ENCODE measurements at regions of chrX and their contacts with region 1.

Region 1: DNA sequence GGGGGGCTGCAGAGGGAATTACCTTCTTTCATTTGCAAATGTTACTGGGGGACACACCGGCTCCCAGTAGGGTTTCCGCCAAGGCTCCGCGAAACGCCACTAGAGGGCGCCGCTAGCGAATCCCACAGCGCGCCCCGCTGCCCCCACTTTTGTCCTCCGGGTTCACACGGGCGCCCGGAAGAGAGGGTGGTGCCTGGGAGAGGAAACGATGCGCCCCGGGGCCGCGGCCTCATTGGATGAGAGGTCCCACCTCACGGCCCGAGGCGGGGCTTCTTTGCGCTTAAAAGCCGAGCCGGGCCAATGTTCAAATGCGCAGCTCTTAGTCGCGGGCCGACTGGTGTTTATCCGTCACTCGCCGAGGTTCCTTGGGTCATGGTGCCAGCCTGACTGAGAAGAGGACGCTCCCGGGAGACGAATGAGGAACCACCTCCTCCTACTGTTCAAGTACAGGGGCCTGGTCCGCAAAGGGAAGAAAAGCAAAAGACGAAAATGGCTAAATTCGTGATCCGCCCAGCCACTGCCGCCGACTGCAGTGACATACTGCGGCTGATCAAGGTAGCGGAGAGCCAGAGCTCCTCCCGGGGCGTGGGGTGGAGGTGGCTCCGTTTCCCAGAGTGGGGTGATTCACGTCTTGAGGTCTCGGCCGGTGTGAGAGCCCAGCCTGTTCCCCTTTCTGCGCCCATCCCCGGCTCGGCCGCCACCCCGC is at the start of gene SAT1:
- DNase-seq: peak; percentile 90
- H3K4me3 Mint-ChIP-seq: peak within 1 kb of the TSS; percentile 97
- H3K27ac Mint-ChIP-seq: peak within 1 kb of the TSS; percentile 95
- H3K4me1 Mint-ChIP-seq: peaks cover 38% of the 10 kb centered on the region
- H3K27me3 Mint-ChIP-seq: no peaks in the 10 kb centered on the region
- total RNA-seq, gene SAT1: 71.8 and 74.8 TPM in 2 replicates

Region 2: DNA sequence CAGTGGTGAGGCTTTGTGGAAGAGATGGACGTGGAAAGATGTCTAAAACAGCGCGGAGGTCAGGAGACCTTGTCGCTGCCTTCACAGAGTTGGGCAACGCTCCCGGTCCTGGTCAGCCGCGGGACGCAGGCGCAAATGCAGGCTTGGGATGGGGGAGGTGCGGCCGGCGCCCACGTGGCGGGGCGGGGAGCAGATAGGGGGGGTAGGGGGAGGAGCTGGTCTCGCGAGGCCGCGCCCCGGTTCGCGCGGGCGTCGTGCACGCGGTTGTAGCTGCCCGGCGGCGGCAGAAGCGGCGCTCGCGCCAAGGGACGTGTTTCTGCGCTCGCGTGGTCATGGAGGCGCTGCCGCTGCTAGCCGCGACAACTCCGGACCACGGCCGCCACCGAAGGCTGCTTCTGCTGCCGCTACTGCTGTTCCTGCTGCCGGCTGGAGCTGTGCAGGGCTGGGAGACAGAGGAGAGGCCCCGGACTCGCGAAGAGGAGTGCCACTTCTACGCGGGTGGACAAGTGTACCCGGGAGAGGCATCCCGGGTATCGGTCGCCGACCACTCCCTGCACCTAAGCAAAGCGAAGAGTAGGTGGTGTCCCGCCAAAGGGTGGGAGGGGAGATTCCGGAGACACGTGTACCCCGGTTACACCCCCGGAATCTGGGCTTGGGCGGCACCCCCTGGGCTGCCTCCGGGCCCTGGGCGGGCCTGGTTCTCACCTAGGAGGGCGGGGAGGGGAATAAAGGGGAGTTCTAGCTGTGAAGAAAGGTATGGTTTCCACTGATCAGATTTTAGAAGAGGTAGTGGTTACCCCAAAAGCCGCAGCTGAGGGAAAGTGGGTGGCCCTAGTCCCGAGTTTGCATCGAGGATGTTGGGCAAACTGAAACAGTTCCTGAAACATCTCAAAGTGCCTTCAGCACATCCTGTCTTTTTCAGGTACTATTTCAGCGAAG is 115.5 kb before region 1 on chrX and contains the start of gene PRDX4:
- intact Hi-C with region 1: loop called (anchors 2 kb)
- DNase-seq: peak; percentile 66
- H3K4me3 Mint-ChIP-seq: peak within 1 kb of the TSS; percentile 88
- H3K27ac Mint-ChIP-seq: peak within 1 kb of the TSS; percentile 94
- H3K4me1 Mint-ChIP-seq: peaks cover 37% of the 10 kb centered on the region
- H3K27me3 Mint-ChIP-seq: no peaks in the 10 kb centered on the region
- total RNA-seq, gene PRDX4: 75.5 and 83.2 TPM in 2 replicates

Region 3: DNA sequence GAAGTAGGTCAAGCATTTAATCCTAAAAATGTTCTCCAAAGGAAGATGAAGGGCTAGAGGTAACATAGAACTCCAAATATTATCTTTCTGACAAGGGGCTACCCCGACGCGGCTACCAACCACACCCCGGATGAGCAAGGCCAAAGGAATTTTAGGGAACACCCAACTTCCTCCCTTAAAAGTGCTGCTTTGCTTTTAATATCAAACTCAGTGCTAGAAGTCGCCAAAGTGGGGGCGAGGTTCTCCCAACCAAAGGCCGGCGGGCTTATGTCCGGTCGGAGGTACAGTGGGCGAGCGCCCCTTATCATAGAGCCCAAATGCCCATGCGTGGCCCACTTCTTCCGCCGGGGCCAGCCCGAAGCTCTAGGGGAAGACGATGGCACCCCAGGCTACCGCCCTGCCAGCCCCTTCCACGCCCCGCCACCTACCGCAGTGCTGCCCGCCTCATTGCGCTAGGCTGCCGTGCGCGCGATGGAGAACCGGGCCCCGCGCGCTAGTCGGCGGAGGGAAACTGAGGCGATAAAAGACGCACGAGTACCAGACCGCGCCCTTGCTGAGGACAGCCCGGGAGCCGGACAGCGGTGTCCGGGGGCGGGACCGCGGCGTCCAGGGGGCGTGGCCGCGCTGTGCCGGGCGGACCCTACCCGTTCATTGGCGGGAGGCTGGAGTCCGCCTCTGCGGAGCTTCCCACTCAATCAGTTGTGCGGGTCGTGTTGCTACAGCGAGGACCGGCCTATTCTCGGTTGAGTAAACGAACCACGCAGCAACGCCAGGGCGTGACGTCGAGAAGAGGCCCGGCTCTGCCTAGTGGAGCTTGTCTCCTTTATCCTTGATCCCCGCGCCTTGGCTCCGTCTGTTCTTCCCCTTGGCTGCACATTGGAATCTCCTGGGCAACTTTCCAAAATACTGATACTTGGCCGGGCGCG is 40.1 kb before region 1 on chrX and contains the start of gene ACOT9:
- intact Hi-C with region 1: loop called (anchors 1 kb)
- DNase-seq: peak; percentile 77
- H3K4me3 Mint-ChIP-seq: peak within 1 kb of the TSS; percentile 93
- H3K27ac Mint-ChIP-seq: peak within 1 kb of the TSS; percentile 92
- H3K4me1 Mint-ChIP-seq: peaks cover 29% of the 10 kb centered on the region
- H3K27me3 Mint-ChIP-seq: no peaks in the 10 kb centered on the region
- total RNA-seq, gene ACOT9: 58.3 and 60.3 TPM in 2 replicates

Region 4: DNA sequence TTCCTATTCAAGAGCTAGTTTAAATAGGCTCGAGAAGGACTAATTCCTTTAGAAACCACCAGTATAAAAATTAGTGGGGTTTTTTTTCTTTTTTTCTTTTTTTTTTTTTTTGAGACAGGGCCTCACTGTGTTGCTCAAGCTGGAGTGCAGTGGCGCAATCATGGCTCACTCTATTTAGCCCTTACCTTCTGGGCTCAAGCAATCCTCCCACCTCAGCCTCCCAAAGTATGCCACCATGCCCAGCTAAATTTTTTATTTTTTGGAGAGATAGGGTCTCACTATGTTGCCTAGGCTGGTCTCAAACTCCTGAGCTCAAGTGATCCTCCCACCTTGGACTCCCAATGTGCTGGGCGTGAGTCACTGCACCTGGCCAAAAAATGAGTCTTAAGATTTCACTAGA is 71.9 kb after region 1 on chrX:
- intact Hi-C with region 1: no loop called
- DNase-seq: no peak
- H3K4me3 Mint-ChIP-seq: no peak overlapping the region
- H3K27ac Mint-ChIP-seq: no peak overlapping the region
- H3K4me1 Mint-ChIP-seq: no peaks in the 10 kb centered on the region
- H3K27me3 Mint-ChIP-seq: no peaks in the 10 kb centered on the region

Region 5: DNA sequence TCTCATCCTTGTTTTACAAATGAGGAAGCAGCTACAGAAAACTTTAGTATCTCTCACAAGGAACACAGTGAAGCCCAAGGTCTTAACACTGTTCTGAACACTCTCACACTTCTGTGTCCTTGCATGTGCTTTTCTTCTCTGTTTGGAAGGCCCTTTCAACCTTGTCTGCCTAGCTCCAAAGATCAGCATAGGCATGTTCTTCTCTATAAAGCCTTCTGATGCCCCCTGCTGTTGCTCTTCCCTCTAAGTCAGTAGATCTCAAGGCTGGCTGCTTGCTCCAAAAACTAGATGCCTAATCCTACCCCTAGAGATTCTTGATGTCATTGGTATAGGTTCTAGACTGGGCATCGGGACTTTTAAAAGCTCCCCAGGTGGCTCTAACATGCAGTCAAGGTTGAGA is 118.8 kb after region 1 on chrX:
- intact Hi-C with region 1: loop called (anchors 1 kb)
- DNase-seq: peak; percentile 9
- H3K4me3 Mint-ChIP-seq: no peak overlapping the region
- H3K27ac Mint-ChIP-seq: no peak overlapping the region
- H3K4me1 Mint-ChIP-seq: peaks cover 5% of the 10 kb centered on the region
- H3K27me3 Mint-ChIP-seq: no peaks in the 10 kb centered on the region

Region 6: GRCh38 chrX:23952984-23953907 is 170.2 kb after region 1 on chrX:
- intact Hi-C with region 1: loop called (anchors 2 kb)
- DNase-seq: peak; percentile 45
- H3K4me3 Mint-ChIP-seq: peak overlapping the region; percentile 82
- H3K27ac Mint-ChIP-seq: peak overlapping the region; percentile 95
- H3K4me1 Mint-ChIP-seq: peaks cover 28% of the 10 kb centered on the region
- H3K27me3 Mint-ChIP-seq: no peaks in the 10 kb centered on the region

Region 7: DNA sequence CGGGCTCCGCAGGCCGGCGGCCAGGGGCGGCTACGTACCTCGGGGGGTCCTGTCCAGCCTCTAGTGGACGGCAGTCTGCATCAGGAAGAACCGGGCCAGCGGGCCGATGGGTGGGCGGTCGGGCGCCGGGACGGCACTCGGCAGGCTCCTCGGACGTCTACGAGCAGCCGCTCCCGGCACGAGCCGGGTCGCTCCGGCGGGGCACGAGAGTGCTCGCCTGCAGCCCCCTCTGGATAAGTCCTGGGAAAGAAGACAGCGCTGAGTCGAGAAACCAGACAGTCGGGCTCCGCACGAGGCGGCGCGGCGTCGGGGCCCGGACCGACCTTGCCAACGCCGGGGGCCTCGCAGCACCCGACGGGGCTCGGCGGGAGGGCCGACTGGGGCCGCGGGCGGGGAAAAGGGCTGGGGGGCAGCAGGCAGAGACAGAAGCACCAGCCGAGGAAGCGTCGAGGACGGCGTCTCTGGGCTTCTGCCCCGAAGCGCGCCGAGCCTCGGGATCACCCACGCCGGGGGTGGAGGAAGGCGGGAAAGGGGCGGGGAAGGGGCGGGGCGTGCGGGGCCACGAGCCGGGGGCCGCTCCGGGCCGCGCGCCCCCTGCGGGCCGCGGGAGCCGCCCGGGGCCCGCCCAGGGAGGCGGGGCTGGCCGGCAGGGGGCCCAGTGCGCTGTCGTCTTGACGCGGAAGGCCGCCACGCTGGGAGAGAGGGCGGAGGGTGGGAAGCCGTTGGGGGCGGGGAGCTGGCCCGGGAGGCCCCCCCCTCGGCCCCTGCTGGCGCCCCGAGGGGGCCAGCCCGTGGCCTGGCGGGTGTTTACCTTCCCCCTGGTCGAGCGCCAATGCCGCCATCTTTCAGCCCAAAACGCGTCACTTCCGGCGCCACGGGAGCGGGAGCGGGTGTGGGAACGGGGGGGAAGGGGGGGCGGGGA is 242.1 kb after region 1 on chrX:
- intact Hi-C with region 1: loop called (anchors 2 kb)
- DNase-seq: peak; percentile 72
- H3K4me3 Mint-ChIP-seq: peak overlapping the region; percentile 92
- H3K27ac Mint-ChIP-seq: peak overlapping the region; percentile 88
- H3K4me1 Mint-ChIP-seq: peaks cover 25% of the 10 kb centered on the region
- H3K27me3 Mint-ChIP-seq: no peaks in the 10 kb centered on the region

Region 8: DNA sequence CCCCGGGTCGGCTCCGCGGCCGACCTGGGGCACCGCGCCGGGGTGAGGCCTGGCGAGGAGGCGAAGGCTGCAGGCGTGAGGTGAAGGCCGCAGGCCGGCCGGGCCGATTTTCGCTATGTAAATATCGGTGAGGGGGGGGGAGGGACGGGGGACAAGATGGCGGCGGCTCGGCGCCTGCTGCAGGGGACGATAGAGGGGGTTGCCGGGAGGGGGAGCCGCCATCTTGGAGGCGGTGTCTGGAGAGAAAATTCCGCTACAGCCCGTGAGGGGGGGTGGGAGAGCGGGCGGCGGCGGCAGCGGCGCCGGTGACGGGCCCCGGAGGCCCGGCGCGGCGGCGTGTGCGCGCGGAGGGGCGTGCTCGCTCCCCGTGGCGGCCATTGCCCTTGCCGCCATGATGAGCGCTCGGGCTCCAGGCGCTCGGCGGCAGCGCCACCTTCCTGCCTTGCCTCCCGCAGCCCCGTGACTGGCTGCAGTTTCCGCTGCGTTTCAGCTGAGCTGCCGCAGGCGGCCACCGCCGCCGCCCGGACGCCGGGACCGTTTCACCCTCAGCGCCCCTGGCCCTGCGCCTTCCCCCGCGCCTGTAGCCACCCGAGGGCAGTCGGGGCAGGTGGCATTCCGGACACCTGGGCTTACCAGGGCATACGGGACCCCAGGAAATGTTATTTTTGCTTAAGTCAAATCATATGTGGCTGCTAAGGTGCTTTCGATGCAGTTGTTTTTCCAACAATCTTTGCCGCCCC is 367.2 kb after region 1 on chrX:
- intact Hi-C with region 1: loop called (anchors 5 kb)
- DNase-seq: peak; percentile 76
- H3K4me3 Mint-ChIP-seq: peak overlapping the region; percentile 95
- H3K27ac Mint-ChIP-seq: peak overlapping the region; percentile 92
- H3K4me1 Mint-ChIP-seq: peaks cover 64% of the 10 kb centered on the region
- H3K27me3 Mint-ChIP-seq: no peaks in the 10 kb centered on the region

Measured in activated T-helper 1 cell treated with anti-CD3 and anti-CD28 coated beads, Interleukin-12 subunit alpha, Interleukin-12 subunit beta, Interleukin-2, Interleukin-4 antibody, amounts not matched to agents 30 ng/mL and 10 ng/mL and 1 ng/mL, durations not matched to agents 14 hours and 24 hours and 36 hours (primary cell).